Naive thymus-derived CD8-positive, alpha-beta T cell (primary cell): ENCODE measurements at regions of chr1 and their contacts with region 1.

Region 1: DNA sequence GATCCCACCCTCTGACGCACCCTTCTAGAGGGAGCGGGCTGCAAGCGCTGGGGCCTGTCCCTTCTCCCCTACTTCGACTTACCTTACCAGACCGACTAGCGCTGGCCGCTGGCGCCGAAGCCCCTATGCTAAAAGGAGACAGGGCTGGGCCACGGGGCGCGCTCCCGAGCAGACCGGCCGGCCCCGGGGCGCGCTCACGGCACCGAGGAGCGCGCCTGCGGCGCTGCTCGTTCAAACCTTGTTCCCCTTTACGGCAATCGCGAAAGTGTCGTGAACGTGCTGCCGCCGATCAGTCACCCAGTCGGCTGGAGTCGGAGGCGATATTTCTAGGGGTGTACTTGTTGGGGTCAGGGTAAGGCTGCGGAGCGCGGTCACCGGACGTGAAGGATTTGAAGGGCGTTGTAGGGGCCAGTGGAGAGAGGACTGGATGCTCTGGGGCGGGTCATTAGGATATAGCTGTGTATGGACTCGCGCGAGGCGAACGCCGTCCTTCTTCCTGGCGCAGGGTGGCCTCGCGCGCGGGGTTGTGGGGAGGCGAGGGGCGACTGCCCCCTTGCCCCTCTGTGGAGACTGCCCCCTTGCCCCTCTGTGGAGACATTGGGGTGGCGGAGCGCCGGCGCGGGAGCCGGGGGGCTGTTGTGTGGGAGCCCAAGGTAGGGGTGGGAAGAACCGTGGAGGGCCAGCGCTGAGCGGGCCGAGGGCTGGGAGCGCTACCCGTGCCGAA is at the starts of genes CEPT1 and DRAM2:
- DNase-seq: peak; percentile 86 to 94 (median 92)
- ATAC-seq: peak; percentile 69 to 73
- H3K4me3 Mint-ChIP-seq: peak within 1 kb of the TSS; percentile 91 to 100 (median 100)
- H3K27ac Mint-ChIP-seq: peak within 1 kb of the TSS; percentile 96 to 100 (median 98)
- H3K4me1 Mint-ChIP-seq: peaks cover 20 to 73% (median 53%) of the 10 kb centered on the region in 4 donors
- H3K27me3 Mint-ChIP-seq: no peaks in the 10 kb centered on the region
- polyA plus RNA-seq, gene CEPT1: 18.0 to 28.6 (median 27.2) TPM
- polyA plus RNA-seq, gene DRAM2: 84.3 to 95.3 (median 91.2) TPM

Region 2: DNA sequence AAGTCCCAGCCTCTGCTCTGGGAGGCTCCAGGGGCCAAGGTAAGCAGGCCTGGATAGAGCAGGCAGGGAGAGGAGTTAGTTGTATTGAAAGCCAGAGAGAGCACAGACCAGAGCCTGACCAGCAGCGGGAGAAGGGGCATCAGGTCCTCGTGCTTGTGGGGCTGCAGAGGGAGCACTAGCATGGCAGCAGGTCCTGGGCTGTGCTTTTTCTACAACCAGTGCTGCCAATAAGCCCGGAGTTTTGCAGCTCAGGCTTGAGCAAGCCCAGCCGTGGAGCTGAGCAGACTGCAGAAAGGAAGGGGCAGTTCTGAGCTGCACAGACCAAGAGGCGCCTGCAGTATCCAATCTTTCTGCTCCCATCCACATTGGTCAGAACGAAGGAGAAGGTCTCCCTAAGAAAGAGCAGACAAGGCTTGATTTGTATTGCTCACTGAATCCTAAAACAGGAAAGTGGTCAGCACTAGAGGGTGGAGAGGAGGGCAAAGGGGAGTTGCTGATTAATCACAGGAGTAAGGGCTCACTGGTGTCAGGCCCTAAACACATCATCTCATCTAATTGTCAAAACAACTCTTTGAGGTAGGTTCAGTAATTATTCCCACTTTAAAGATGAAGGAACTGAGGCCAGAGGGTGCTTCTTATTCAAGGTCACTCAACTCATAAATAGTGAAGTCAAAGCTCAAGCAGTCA is 57.6 kb after region 1 on chr1:
- POLR2A ChIA-PET with region 1: interaction called, 22 read pairs
- DNase-seq: peak; percentile 37 to 83 (median 74)
- ATAC-seq: peak; percentile 43 to 77
- H3K4me3 Mint-ChIP-seq: peak overlapping the region; percentile 96 to 100 (median 99)
- H3K27ac Mint-ChIP-seq: peak overlapping the region; percentile 78 to 99 (median 96)
- H3K4me1 Mint-ChIP-seq: peaks cover 50 to 95% (median 73%) of the 10 kb centered on the region in 4 donors
- H3K27me3 Mint-ChIP-seq: no peaks in the 10 kb centered on the region

Region 3: DNA sequence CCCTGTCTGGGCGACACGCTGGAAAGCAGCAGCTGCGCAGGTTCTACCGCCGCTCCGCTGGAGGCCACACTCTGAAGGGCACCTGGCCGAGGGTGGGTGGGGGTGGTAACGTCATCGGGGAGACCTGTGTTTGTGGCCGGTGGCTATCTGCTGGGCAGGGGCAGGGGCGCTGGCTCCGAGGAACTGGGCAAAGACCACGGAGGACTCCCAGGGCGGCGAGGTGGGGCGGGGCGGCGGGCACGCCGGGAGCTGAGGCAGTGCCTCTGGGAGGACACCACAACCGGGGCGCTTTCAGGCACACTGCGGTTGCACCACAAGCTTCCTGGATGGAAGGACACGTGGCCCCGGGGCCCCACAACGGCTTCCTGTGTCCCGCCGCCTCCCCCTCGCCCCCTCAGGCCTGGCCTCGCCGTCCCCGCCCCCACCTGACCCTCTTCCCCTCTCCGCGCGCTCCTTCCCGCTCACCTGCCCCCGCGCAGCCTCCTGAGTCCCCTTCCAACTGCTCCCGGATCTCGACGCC is 63.6 kb after region 1 on chr1:
- POLR2A ChIA-PET with region 1: interaction called, 22 read pairs
- DNase-seq: peak; percentile 65 to 93 (median 82)
- ATAC-seq: peak; percentile 58 to 71
- H3K4me3 Mint-ChIP-seq: peak overlapping the region; percentile 83 to 100 (median 99)
- H3K27ac Mint-ChIP-seq: peak overlapping the region; percentile 89 to 99 (median 96)
- H3K4me1 Mint-ChIP-seq: peaks cover 33 to 85% (median 71%) of the 10 kb centered on the region in 4 donors
- H3K27me3 Mint-ChIP-seq: no peaks in the 10 kb centered on the region

Region 4: GRCh38 chr1:111214074-111214801 is 74.1 kb after region 1 on chr1:
- POLR2A ChIA-PET with region 1: interaction called, 18 read pairs
- DNase-seq: no peak
- ATAC-seq: no peak
- H3K4me3 Mint-ChIP-seq: peak overlapping the region; percentile 44 to 95 (median 78)
- H3K27ac Mint-ChIP-seq: peak overlapping the region; percentile 87 to 99 (median 96)
- H3K4me1 Mint-ChIP-seq: peaks cover 55 to 95% (median 89%) of the 10 kb centered on the region in 4 donors
- H3K27me3 Mint-ChIP-seq: peaks cover 0 to 3% (median 0%) of the 10 kb centered on the region in 5 donors

Region 5: DNA sequence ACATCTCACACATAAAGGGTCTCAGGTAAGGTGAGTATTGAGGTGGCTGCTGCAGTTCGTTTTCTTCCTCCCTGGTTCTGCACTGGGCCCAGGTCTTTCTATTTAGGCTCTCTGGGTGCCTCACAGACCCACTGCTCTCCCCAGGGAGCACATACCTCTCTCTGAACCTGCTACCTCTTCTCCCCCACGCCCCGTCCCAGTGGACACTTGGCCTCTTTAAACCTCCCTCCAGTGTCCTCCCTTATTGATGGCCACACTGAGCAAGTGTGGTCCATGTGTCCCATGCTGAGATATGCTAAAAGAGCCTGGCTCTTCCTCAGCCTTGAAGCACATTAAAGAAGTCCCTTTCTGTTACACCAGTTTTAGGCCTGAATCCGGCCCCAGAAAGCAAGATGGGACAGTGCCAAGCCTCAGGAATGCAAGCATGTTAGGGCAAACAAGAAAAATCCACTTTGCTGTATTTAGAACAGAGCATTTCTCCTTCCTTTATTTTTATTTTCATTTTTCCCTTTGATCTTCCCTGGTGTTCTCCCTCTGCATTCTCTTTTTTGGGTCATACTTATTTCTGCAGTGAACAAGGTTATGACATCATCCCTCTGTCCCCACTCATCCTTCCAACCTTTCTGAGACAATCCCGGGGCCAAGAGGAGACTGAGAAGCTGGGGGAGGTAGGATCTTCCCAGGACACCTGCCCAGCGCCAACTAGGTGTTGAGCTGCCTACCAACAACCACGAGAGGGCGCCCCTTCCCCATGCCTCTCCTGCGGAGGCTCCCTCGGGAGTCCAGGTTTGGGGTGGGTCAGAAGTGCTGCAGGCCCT is 82.4 kb after region 1 on chr1:
- POLR2A ChIA-PET with region 1: interaction called, 18 read pairs
- DNase-seq: peak; percentile 44 to 84 (median 68)
- ATAC-seq: peak; percentile 22
- H3K4me3 Mint-ChIP-seq: peak overlapping the region; percentile 68 to 95 (median 84)
- H3K27ac Mint-ChIP-seq: peak overlapping the region; percentile 87 to 99 (median 95)
- H3K4me1 Mint-ChIP-seq: peaks cover 58 to 99% (median 93%) of the 10 kb centered on the region in 4 donors
- H3K27me3 Mint-ChIP-seq: no peaks in the 10 kb centered on the region